Left ventricle myocardium inferior (tissue), 1 donor: ENCODE measurements at regions of chr20 and their contacts with region 1.

Region 1: GRCh38 chr20:46022411-46023147 is 6.4 kb upstream of the SLC12A5 start:
- DNase-seq: peak; percentile 54
- H3K4me3 ChIP-seq: peak overlapping the region; percentile 63
- H3K27ac ChIP-seq: no peak overlapping the region
- H3K4me1 ChIP-seq: peaks cover 19% of the 10 kb centered on the region
- H3K27me3 ChIP-seq: peaks cover 100% of the 10 kb centered on the region
- CTCF ChIP-seq: peak; percentile 74

Region 2: DNA sequence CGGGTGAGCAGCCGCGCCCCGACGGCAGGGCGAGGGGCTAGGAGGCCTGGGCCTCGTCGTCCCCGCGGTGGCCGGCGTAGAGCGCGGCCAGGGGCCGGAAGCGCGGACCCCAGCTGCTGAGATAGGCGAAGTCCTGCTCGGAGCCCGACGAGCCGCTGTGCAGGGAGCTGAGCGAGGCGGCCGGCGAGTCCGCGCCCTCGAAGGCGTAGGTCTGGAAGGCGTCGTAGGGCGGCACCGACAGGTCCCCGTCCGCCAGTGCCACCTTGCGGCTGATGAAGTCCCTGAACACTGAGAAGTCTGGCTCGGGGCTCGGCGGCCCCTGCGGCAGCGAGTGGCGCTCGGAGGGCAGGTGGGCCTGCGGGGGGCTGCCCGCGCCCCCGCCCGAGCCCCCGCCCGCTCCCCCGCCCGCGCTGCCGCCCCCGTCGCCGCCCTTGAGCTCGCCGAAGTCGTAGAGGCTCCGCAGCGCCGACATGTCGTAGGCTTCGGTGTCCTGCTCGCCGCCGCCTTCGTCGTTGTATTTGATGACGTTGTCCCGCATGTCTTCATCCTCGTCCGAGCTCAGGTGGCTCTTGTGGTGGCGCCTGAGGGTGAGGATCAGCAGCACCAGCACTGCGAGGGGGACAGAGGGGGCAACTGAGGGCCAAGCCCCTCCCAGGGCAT is 152.0 kb after region 1 on chr20:
- intact Hi-C with region 1: loop called (anchors 10 kb)
- DNase-seq: peak; percentile 66
- H3K4me3 ChIP-seq: no peak overlapping the region
- H3K27ac ChIP-seq: no peak overlapping the region
- H3K4me1 ChIP-seq: peaks cover 8% of the 10 kb centered on the region
- H3K27me3 ChIP-seq: peaks cover 95% of the 10 kb centered on the region
- CTCF ChIP-seq: peak; percentile 78

Region 3: DNA sequence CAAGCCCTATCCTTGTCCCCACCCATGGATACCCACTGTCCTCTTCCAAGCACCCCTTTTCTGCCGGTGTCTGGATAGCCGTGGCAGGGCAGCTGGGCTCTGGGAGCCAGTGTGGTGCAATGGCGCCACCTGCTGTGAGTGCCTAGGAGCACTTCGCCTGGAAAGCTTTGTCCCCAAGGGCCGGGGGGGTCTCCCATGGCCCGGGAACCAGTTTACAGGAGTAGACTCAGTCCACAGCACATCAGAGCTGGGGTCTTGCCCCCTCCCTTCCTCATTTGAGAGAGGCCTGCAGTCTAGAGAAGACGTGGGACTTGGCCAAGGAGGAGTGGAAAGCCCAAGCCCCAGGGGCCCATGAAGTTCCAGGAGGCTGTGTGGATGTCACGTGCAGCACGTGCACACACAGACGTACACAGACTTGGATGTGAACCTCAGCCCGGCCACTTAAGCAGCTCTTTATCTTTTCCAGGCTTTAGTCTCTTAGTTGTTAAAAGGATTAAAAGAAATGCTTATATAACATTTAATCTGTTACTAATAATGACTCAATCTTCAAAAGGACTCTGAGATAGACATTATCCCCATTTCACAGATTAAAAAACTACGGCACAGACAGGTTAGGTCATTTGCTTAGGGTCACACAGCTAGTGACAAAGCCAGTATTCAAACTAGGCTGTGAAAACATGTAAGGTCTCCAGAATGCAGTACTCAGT is 326.6 kb after region 1 on chr20:
- intact Hi-C with region 1: loop called (anchors 5 kb)
- DNase-seq: peak; percentile 57
- H3K4me3 ChIP-seq: no peak overlapping the region
- H3K27ac ChIP-seq: no peak overlapping the region
- H3K4me1 ChIP-seq: peaks cover 12% of the 10 kb centered on the region
- H3K27me3 ChIP-seq: no peaks in the 10 kb centered on the region
- CTCF ChIP-seq: peak; percentile 87